ENCODE measurements at regions of chr1 and their contacts with region 1.

Region 1: GRCh38 chr1:235971571-235972310 is 93.1 kb downstream of the NID1 start:
- DNase-seq: peak; percentile 94
- H3K4me3 ChIP-seq: no peak overlapping the region
- H3K27ac ChIP-seq: peak overlapping the region; percentile 64
- H3K4me1 ChIP-seq: peaks cover 22% of the 10 kb centered on the region
- H3K27me3 ChIP-seq: peaks cover 0 to 1% of the 10 kb centered on the region in 2 experiments
- CTCF ChIP-seq: peak; percentile 85 to 89
- POLR2A ChIP-seq: no peak

Region 2: DNA sequence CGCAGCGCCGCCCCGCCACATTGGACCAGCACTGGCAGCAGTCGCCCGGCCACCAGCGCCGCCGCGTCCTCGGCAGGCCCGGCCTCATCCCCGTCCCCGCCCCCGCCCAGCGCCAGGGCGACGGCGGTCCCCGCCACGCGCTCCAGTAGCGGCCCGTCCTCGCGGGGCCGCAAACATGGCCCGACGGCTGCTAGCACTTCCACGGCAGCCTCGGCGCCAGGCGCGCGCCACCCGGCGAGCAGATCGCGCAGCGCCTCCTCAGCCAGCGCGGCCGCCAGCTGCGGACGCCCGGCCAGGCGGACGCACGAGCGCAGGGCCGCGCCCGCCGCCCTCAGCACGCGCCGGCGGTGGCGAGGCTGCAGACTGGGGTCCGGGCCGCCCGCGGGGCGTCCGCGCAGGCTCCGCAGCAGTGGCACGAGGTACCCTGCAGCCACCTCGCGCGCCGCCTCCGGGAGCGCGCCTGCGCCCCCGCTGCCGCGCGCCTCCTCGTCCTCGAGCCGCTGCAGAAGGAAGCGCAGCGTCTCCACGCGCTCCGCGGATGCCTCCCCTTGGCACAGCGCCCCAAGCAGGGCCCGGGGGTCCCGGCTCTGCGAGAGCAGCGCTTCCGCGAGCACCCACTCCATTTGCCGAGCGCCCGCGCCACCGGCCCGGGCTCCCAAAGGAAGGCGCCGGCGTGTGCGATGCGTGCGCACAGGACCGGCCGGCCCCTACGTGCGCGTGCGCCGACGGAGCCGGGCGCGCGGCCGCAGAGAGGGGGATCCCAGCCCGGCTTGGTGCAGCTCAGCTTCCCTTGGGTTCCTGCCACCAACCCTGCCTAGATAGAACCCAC is 1493.0 kb before region 1 on chr1 and contains the start of gene TARBP1:
- CTCF ChIA-PET with region 1: no interaction called
- POLR2A ChIA-PET with region 1: no interaction called
- dilution Hi-C with region 1: no loop called
- intact Hi-C with region 1: no loop called
- DNase-seq: peak; percentile 75
- H3K4me3 ChIP-seq: peak within 1 kb of the TSS; percentile 46 to 78 (median 48)
- H3K27ac ChIP-seq: peak within 1 kb of the TSS; percentile 35
- H3K4me1 ChIP-seq: peaks cover 6% of the 10 kb centered on the region
- H3K27me3 ChIP-seq: peaks cover 18 to 21% of the 10 kb centered on the region in 2 experiments
- CTCF ChIP-seq: peak in 1 of 2 donors; percentile 27
- POLR2A ChIP-seq: peak; percentile 71
- total RNA-seq, gene TARBP1: 21.0 and 23.4 TPM in 2 replicates

Region 3: GRCh38 chr1:235642011-235642942 is 329.5 kb before region 1 on chr1:
- CTCF ChIA-PET with region 1: no interaction called
- POLR2A ChIA-PET with region 1: no interaction called
- dilution Hi-C with region 1: no loop called
- intact Hi-C with region 1: loop called (anchors 1 kb)
- DNase-seq: peak; percentile 62
- H3K4me3 ChIP-seq: no peak overlapping the region
- H3K27ac ChIP-seq: no peak overlapping the region
- H3K4me1 ChIP-seq: peaks cover 7% of the 10 kb centered on the region
- H3K27me3 ChIP-seq: peaks cover 2% of the 10 kb centered on the region in 2 experiments
- CTCF ChIP-seq: no peak
- POLR2A ChIP-seq: no peak

Region 4: GRCh38 chr1:235843461-235843961 is 128.2 kb before region 1 on chr1:
- CTCF ChIA-PET with region 1: interaction called, 40 read pairs
- POLR2A ChIA-PET with region 1: no interaction called
- dilution Hi-C with region 1: no loop called
- intact Hi-C with region 1: no loop called
- DNase-seq: peak; percentile 24
- H3K4me3 ChIP-seq: no peak overlapping the region
- H3K27ac ChIP-seq: no peak overlapping the region
- H3K4me1 ChIP-seq: no peaks in the 10 kb centered on the region
- H3K27me3 ChIP-seq: no peaks in the 10 kb centered on the region
- CTCF ChIP-seq: peak in 1 of 2 donors; percentile 16
- POLR2A ChIP-seq: no peak

Region 5: DNA sequence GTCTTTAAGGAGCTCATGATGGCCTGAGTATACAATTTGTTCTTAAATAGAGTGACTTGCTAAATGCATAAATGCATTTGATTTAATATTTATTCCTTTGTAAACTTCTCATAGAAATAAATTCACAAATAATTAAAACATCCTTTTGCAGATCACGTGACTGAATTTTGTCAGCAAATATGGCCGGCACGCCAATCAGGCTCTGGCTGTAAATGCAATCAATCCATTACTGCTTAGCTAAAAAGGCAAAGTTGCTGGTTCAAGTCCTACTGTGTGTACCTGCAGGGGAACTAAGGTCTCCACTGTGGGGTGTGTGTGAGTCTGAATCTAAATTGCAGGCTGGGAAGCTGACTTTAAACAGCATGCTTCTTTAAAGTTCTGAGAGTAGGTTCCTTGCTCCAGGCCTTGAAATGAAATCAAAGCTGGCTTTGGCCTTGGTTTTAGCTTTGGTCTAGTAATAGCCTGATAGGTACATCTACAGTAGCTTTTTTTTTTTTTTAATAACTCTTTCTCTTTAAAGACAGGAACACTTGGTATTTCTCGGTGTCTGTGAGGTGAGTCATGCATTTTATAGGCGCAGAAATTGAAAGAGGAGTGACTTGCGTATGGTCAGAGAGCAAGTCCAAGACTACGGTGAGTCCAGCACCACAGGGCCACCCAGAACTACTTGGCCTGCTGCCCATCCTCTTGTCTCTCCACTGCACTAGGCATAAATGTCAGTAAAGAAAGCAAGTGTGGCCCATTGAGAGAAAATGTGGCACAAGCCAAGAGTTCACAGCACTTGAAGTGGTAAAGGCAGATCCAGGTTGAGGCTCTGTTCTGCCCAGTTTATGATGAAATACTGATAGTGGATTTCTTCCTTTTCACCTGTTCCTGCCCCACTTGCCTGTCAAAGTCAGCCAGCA is 68.9 kb before region 1 on chr1:
- CTCF ChIA-PET with region 1: interaction called, 15 read pairs
- POLR2A ChIA-PET with region 1: no interaction called
- dilution Hi-C with region 1: no loop called
- intact Hi-C with region 1: no loop called
- DNase-seq: no peak
- H3K4me3 ChIP-seq: no peak overlapping the region
- H3K27ac ChIP-seq: no peak overlapping the region
- H3K4me1 ChIP-seq: no peaks in the 10 kb centered on the region
- H3K27me3 ChIP-seq: peaks cover 0 to 4% of the 10 kb centered on the region in 2 experiments
- CTCF ChIP-seq: no peak
- POLR2A ChIP-seq: no peak

Region 6: GRCh38 chr1:235938709-235939479 is 32.8 kb before region 1 on chr1:
- CTCF ChIA-PET with region 1: interaction called, 22 read pairs
- POLR2A ChIA-PET with region 1: no interaction called
- dilution Hi-C with region 1: no loop called
- intact Hi-C with region 1: no loop called
- DNase-seq: peak; percentile 47
- H3K4me3 ChIP-seq: no peak overlapping the region
- H3K27ac ChIP-seq: no peak overlapping the region
- H3K4me1 ChIP-seq: peaks cover 7% of the 10 kb centered on the region
- H3K27me3 ChIP-seq: no peaks in the 10 kb centered on the region
- CTCF ChIP-seq: no peak
- POLR2A ChIP-seq: no peak

Region 7: GRCh38 chr1:236052232-236052993 is 80.7 kb after region 1 on chr1:
- CTCF ChIA-PET with region 1: interaction called, 16 read pairs
- POLR2A ChIA-PET with region 1: no interaction called
- dilution Hi-C with region 1: no loop called
- intact Hi-C with region 1: no loop called
- DNase-seq: no peak
- H3K4me3 ChIP-seq: no peak overlapping the region
- H3K27ac ChIP-seq: no peak overlapping the region
- H3K4me1 ChIP-seq: no peaks in the 10 kb centered on the region
- H3K27me3 ChIP-seq: no peaks in the 10 kb centered on the region
- CTCF ChIP-seq: no peak
- POLR2A ChIP-seq: no peak

Region 8: DNA sequence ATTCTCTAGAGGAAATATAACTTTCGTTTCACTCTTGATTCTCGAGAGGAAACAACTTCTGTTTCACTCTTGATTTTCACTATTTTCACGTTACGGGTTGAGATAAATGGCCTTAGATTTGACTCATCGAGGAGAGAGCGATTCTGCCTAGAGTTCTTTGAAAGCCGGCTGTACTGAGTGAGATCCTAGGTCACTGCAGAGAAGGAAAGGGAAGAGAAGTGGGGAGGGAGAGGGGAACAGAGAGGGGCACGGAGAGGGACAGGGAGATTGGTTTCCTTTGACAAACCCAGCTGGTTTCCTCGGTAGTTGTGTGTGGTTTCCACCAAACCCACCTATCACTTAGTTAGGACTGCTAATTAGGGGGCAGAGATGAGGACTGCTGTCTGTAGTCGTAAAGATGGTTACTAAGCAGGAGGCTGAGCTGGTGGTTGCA is 149.0 kb after region 1 on chr1:
- CTCF ChIA-PET with region 1: no interaction called
- POLR2A ChIA-PET with region 1: no interaction called
- dilution Hi-C with region 1: no loop called
- intact Hi-C with region 1: no loop called
- DNase-seq: no peak
- H3K4me3 ChIP-seq: no peak overlapping the region
- H3K27ac ChIP-seq: no peak overlapping the region
- H3K4me1 ChIP-seq: no peaks in the 10 kb centered on the region
- H3K27me3 ChIP-seq: peaks cover 0 to 7% of the 10 kb centered on the region in 2 experiments
- CTCF ChIP-seq: no peak
- POLR2A ChIP-seq: no peak

Measured in endothelial cell of umbilical vein (primary cell).